MCF 10A (cell line): ENCODE measurements at regions of chr10 and their contacts with region 1.

Region 1: GRCh38 chr10:7410862-7411670 is at the start of gene SFMBT2:
- DNase-seq: peak; percentile 68
- H3K4me3 Mint-ChIP-seq: peak within 1 kb of the TSS; percentile 86
- H3K27ac Mint-ChIP-seq: peak within 1 kb of the TSS; percentile 14
- H3K4me1 Mint-ChIP-seq: peaks cover 9% of the 10 kb centered on the region
- H3K27me3 Mint-ChIP-seq: no peaks in the 10 kb centered on the region
- CTCF ChIP-seq: peak; percentile 10
- total RNA-seq, gene SFMBT2: 5.8 and 7.4 TPM in 2 replicates

Region 2: GRCh38 chr10:6920072-6921019 is 490.7 kb before region 1 on chr10:
- CTCF ChIA-PET with region 1: interaction called, 18 read pairs
- POLR2A ChIA-PET with region 1: interaction called, 5 read pairs
- intact Hi-C with region 1: loop called (anchors 1 kb)
- DNase-seq: peak; percentile 79
- H3K4me3 Mint-ChIP-seq: no peak overlapping the region
- H3K27ac Mint-ChIP-seq: no peak overlapping the region
- H3K4me1 Mint-ChIP-seq: peaks cover 25% of the 10 kb centered on the region
- H3K27me3 Mint-ChIP-seq: no peaks in the 10 kb centered on the region
- CTCF ChIP-seq: peak; percentile 82

Region 3: GRCh38 chr10:7121154-7121810 is 289.8 kb before region 1 on chr10:
- CTCF ChIA-PET with region 1: interaction called, 3 read pairs
- POLR2A ChIA-PET with region 1: interaction called, 3 read pairs
- intact Hi-C with region 1: loop called (anchors 1 kb)
- DNase-seq: peak; percentile 62
- H3K4me3 Mint-ChIP-seq: no peak overlapping the region
- H3K27ac Mint-ChIP-seq: no peak overlapping the region
- H3K4me1 Mint-ChIP-seq: peaks cover 8% of the 10 kb centered on the region
- H3K27me3 Mint-ChIP-seq: peaks cover 43% of the 10 kb centered on the region
- CTCF ChIP-seq: peak; percentile 61

Region 4: GRCh38 chr10:7233259-7234009 is 177.6 kb before region 1 on chr10:
- CTCF ChIA-PET with region 1: no interaction called
- POLR2A ChIA-PET with region 1: interaction called, 11 read pairs
- intact Hi-C with region 1: no loop called
- DNase-seq: peak; percentile 84
- H3K4me3 Mint-ChIP-seq: peak overlapping the region; percentile 26
- H3K27ac Mint-ChIP-seq: peak overlapping the region; percentile 14
- H3K4me1 Mint-ChIP-seq: peaks cover 28% of the 10 kb centered on the region
- H3K27me3 Mint-ChIP-seq: no peaks in the 10 kb centered on the region
- CTCF ChIP-seq: no peak

Region 5: DNA sequence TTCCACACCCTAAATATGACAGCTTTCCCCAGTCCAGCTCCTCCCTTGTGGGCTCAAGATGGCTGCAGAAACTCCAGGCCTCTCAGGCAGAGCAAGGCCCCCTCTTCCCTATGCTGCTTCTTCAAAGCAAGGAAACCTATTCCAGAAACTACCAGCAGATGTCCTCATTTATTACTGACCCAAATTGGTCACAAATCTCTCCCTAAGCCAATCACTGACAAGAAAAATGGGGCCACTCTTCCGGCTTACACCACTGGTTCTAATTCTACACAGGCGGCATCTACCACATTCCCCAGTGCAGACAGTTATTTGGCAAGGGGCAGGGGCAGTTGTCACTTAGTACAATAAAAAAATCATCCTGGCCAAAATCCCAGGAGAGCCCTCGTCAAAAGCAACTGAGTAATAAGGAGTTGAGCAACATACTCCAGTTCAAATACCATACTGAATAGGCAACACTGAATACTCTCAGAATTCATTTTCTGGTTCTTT is 150.6 kb before region 1 on chr10:
- CTCF ChIA-PET with region 1: interaction called, 4 read pairs
- POLR2A ChIA-PET with region 1: interaction called, 24 read pairs
- intact Hi-C with region 1: loop called (anchors 1 kb)
- DNase-seq: peak; percentile 97
- H3K4me3 Mint-ChIP-seq: peak overlapping the region; percentile 29
- H3K27ac Mint-ChIP-seq: peak overlapping the region; percentile 47
- H3K4me1 Mint-ChIP-seq: peaks cover 46% of the 10 kb centered on the region
- H3K27me3 Mint-ChIP-seq: no peaks in the 10 kb centered on the region
- CTCF ChIP-seq: peak; percentile 52

Region 6: GRCh38 chr10:7457478-7458316 is 46.6 kb after region 1 on chr10:
- CTCF ChIA-PET with region 1: no interaction called
- POLR2A ChIA-PET with region 1: no interaction called
- intact Hi-C with region 1: no loop called
- DNase-seq: no peak
- H3K4me3 Mint-ChIP-seq: no peak overlapping the region
- H3K27ac Mint-ChIP-seq: no peak overlapping the region
- H3K4me1 Mint-ChIP-seq: peaks cover 6% of the 10 kb centered on the region
- H3K27me3 Mint-ChIP-seq: no peaks in the 10 kb centered on the region
- CTCF ChIP-seq: no peak